Transverse colon (tissue), 4 donors: ENCODE measurements at regions of chr4 and their contacts with region 1.

Region 1: DNA sequence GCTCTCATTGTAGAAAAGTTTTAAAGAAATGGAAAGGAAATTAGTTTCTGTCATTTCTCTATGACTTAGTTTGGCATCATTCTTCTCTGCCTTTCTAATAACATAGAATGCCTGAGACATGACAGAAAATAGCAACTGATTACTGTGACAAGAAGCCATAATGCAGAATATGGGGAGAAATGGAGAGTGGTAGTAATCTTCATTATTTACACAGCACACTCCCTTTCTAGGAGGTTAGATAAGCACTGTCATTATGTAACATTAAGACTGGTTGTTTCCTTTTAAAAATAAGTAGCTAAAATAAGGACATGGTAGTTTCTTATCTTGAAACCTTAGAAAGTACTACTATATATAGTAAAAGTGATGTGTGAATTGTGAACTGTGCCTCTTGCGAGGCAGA is 1227.9 kb upstream of the PABPC4L start:
- DNase-seq: no peak
- H3K4me3 ChIP-seq: no peak overlapping the region
- H3K27ac ChIP-seq: no peak overlapping the region
- H3K4me1 ChIP-seq: no peaks in the 10 kb centered on the region
- H3K27me3 ChIP-seq: no peaks in the 10 kb centered on the region
- CTCF ChIP-seq: no peak
- EP300 ChIP-seq: no peak
- POLR2A ChIP-seq: no peak

Region 2: DNA sequence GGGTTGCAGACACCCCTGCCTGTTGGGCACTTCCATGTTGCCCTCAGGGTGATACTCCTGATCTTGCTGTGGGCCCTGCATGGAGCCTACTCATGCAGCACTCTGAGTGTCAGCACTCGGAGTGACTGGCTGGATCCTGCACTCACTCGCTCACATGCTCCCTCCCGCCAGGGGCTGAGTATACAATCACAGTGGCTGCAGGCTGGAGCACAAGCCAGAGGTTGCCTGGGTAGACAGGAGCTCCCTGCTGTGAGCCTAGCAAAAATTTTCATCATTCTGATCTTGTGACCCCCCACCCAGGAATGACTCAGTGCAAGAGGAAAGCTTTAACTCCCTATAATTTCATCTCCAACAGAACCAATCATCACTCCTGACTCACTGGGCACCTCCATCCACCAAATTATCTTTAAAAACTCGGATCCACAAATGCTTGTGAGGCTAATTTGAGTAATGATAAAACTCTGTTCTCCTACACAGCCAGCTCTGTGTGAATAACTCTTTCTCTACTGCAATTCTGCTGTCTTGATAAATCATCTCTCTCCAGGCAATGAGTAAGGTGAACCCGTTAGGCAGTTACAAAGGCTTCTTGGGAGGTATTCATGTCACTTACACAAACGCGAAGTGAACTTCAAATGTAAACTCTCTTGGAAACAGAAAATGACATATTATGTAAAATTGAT is 47.1 kb before region 1 on chr4:
- in situ Hi-C with region 1: no loop called
- intact Hi-C with region 1: no loop called
- DNase-seq: no peak
- H3K4me3 ChIP-seq: no peak overlapping the region
- H3K27ac ChIP-seq: no peak overlapping the region
- H3K4me1 ChIP-seq: no peaks in the 10 kb centered on the region
- H3K27me3 ChIP-seq: no peaks in the 10 kb centered on the region
- CTCF ChIP-seq: no peak
- EP300 ChIP-seq: no peak
- POLR2A ChIP-seq: no peak

Region 3: DNA sequence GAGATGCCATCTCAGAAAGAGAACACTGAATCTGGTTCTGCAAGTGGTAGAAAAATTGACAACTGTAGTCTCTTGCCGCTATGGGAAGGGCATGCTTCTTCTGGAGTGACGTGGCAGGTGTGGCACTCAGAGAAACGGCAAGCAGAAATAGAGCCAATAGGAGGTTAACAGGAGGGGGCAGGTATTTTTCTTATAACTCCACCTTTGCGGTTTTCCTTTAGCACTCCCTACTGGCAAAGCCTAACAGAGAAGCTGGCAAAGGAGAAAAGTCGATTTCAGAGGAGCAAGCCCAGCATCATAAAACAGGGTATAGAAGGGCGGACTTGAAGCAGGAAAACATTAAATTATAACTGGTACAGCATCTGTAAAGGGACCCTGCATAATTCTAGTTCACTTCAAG is 720.5 kb after region 1 on chr4:
- in situ Hi-C with region 1: no loop called
- intact Hi-C with region 1: no loop called
- DNase-seq: no peak
- H3K4me3 ChIP-seq: no peak overlapping the region
- H3K27ac ChIP-seq: no peak overlapping the region
- H3K4me1 ChIP-seq: no peaks in the 10 kb centered on the region
- H3K27me3 ChIP-seq: no peaks in the 10 kb centered on the region
- CTCF ChIP-seq: no peak
- EP300 ChIP-seq: no peak
- POLR2A ChIP-seq: no peak

Region 4: DNA sequence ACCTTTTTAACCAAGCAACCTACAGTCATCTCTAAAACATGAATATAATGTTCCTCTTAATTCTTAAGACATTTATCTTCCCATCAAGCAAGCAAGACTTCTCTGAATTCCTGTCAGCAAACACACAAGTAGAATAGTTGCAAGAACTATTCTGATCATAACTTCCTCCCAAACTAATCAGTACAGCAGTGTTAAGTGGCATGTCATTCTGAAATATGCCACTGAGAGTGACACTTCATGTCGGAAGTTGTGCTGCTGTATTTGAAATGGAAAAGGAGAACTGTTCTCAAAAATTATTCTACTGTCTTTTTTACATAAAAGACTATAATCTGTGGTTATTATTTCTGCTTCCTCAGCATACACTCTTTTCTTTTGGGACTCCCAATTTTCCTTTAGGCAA is 1556.2 kb after region 1 on chr4:
- in situ Hi-C with region 1: no loop called
- intact Hi-C with region 1: loop called (anchors 10 kb)
- DNase-seq: no peak
- H3K4me3 ChIP-seq: no peak overlapping the region
- H3K27ac ChIP-seq: no peak overlapping the region
- H3K4me1 ChIP-seq: no peaks in the 10 kb centered on the region
- H3K27me3 ChIP-seq: no peaks in the 10 kb centered on the region
- CTCF ChIP-seq: no peak
- EP300 ChIP-seq: no peak
- POLR2A ChIP-seq: no peak